K562 (cell line): ENCODE measurements at regions of chr2 and their contacts with region 1.

Region 1: GRCh38 chr2:10122386-10123280 is at the start of gene RRM2:
- DNase-seq: peak; percentile 95 to 98 (median 96)
- ATAC-seq: peak; percentile 87
- H3K4me3 ChIP-seq: peak within 1 kb of the TSS; percentile 84
- H3K27ac ChIP-seq: peak within 1 kb of the TSS; percentile 99
- H3K4me1 ChIP-seq: peaks cover 24 to 29% of the 10 kb centered on the region in 2 experiments
- H3K27me3 ChIP-seq: no peaks in the 10 kb centered on the region
- CTCF ChIP-seq: no peak
- EP300 ChIP-seq: no peak
- POLR2A ChIP-seq: peak; percentile 99
- RAD21 ChIP-seq: no peak
- polyA plus RNA-seq, gene RRM2: 50.1 to 50.7 TPM

Region 2: GRCh38 chr2:10103179-10103732 is 19.4 kb before region 1 on chr2:
- CTCF ChIA-PET with region 1: no interaction called
- POLR2A ChIA-PET with region 1: interaction called, 10 read pairs
- in situ Hi-C with region 1: no loop called
- intact Hi-C with region 1: no loop called
- DNase-seq: peak in 3 of 4 experiments; percentile 50 to 71 (median 66)
- ATAC-seq: peak; percentile 66
- H3K4me3 ChIP-seq: no peak overlapping the region
- H3K27ac ChIP-seq: no peak overlapping the region; the same call in 2 of the 3 replicates
- H3K4me1 ChIP-seq: peaks cover 8 to 9% of the 10 kb centered on the region in 2 experiments; a peak in 4 of 5 replicates
- H3K27me3 ChIP-seq: no peaks in the 10 kb centered on the region
- CTCF ChIP-seq: no peak
- EP300 ChIP-seq: no peak
- POLR2A ChIP-seq: no peak
- RAD21 ChIP-seq: no peak

Region 3: GRCh38 chr2:10242998-10243925 is 120.6 kb after region 1 on chr2:
- CTCF ChIA-PET with region 1: no interaction called
- POLR2A ChIA-PET with region 1: no interaction called
- in situ Hi-C with region 1: no loop called
- intact Hi-C with region 1: no loop called
- DNase-seq: no peak
- ATAC-seq: no peak
- H3K4me3 ChIP-seq: no peak overlapping the region
- H3K27ac ChIP-seq: no peak overlapping the region
- H3K4me1 ChIP-seq: peaks cover 0 to 23% of the 10 kb centered on the region in 2 experiments; a peak in 3 of 5 replicates
- H3K27me3 ChIP-seq: peaks cover 10 to 37% of the 10 kb centered on the region in 2 experiments; a peak in 4 of 5 replicates
- CTCF ChIP-seq: no peak
- EP300 ChIP-seq: no peak
- POLR2A ChIP-seq: no peak
- RAD21 ChIP-seq: no peak

Region 4: DNA sequence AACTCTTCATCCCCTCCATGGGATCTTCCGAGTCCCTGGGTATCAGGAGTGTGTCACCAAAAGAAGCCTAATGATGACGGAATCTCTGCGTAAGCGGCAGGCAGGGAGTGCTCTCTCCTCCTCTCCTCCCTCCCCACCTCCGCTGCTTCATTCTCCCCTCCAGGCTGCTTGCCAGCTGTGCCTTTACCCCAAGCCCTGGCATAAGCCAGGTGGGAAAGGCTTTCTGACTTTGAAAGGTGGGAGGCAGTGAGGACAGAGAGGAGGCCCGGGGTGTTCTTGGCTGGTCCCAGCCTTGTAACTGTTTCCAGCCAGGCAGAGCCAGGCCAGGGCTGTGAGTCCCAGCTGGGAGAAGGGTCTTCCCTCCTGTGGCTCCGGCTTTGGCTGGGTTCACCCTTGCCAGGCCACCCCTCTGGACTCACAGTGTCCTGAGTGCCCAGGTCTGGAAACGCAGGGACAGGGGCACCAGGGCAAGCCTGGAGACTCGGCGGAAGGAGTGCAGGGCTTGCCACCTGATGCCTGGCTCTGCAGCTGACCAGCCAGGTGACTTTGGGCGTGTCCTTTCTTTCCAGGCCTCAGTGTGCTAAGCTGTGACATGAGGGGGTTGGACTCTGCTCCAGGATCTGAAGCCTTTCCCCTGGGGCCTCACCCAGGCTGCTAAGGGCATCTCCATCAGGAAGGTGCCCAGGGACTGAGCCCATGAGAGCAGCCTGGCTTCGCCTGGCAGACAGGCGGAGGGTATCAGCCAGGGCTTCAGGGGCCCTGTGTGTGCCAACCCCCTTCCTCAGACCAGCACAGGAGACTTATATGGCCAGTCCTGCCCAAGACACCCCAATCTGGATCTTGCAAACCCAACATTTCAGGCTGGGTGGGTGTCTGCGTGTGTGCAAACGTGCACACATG is 147.3 kb after region 1 on chr2:
- CTCF ChIA-PET with region 1: interaction called, 3 read pairs
- POLR2A ChIA-PET with region 1: interaction called, 3 read pairs
- in situ Hi-C with region 1: no loop called
- intact Hi-C with region 1: loop called (anchors 1 kb)
- DNase-seq: no peak
- ATAC-seq: no peak
- H3K4me3 ChIP-seq: no peak overlapping the region
- H3K27ac ChIP-seq: no peak overlapping the region
- H3K4me1 ChIP-seq: peaks cover 26 to 51% of the 10 kb centered on the region in 2 experiments; a peak in 4 of 5 replicates
- H3K27me3 ChIP-seq: no peaks in the 10 kb centered on the region
- CTCF ChIP-seq: no peak
- EP300 ChIP-seq: no peak
- POLR2A ChIP-seq: no peak
- RAD21 ChIP-seq: no peak

Region 5: DNA sequence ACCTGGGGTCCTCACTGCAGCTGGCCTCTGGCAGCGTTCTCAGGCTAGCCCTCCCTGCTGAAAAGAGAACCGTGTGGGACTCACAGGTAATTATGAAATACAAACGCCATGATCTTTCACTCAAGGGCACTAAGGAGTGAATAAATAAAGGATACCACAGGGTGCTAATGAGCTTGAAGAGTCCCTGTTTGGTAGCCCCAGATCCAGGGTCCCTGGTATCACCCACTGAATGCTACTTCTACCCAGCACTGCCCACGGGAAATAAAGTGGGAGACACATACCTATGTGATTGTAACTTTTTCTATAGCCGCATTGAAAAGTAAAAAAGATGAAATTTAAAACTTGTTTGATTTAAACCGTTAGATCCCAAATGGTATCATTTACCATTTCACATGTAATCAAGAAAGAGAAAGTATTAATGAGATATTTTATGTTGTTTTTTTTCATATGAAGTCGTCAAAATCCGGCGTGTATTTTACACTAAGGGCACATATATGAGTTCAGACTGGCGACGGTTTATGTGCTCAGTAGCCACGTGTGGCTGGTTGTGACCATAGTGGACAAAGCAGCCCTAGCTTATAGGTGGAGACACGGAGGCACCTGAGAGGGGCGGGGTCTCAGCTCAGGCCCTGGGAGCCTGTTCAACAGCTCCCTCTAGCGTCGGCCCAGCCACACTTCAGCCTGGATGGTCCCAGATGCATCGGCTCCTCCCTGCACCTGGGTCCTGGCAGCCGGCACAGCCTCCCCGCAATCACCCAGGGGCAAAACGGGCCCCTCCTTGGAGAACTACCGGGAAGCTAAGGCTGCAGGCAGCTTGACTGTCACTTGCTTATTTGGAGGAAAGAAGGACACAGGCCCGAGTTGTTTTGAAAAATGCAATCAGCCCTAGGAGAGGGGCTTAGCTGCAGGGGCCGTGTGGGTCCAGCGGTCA is 286.3 kb after region 1 on chr2:
- CTCF ChIA-PET with region 1: interaction called, 7 read pairs
- POLR2A ChIA-PET with region 1: interaction called, 6 read pairs
- in situ Hi-C with region 1: no loop called
- intact Hi-C with region 1: loop called (anchors 1 kb)
- DNase-seq: peak; percentile 90 to 94 (median 93)
- ATAC-seq: peak; percentile 89
- H3K4me3 ChIP-seq: no peak overlapping the region
- H3K27ac ChIP-seq: peak overlapping the region; percentile 81
- H3K4me1 ChIP-seq: peaks cover 17 to 38% of the 10 kb centered on the region in 2 experiments; a peak in 4 of 5 replicates
- H3K27me3 ChIP-seq: no peaks in the 10 kb centered on the region
- CTCF ChIP-seq: peak; percentile 94 to 97 (median 97)
- EP300 ChIP-seq: peak; percentile 8; the same call in 1 of the 2 replicates
- POLR2A ChIP-seq: no peak
- RAD21 ChIP-seq: peak; percentile 93 to 96